ENCODE measurements at regions of chr18 and their contacts with region 1.

Region 1: GRCh38 chr18:58813561-58814225 is 51.0 kb upstream of the ZNF532 start:
- DNase-seq: no peak
- ATAC-seq: no peak
- H3K4me3 ChIP-seq: no peak overlapping the region
- H3K4me3 Mint-ChIP-seq: no peak overlapping the region
- H3K27ac ChIP-seq: no peak overlapping the region
- H3K27ac Mint-ChIP-seq: no peak overlapping the region
- H3K4me1 ChIP-seq: no peaks in the 10 kb centered on the region
- H3K4me1 Mint-ChIP-seq: no peaks in the 10 kb centered on the region
- H3K27me3 ChIP-seq: peaks cover 0 to 2% (median 0%) of the 10 kb centered on the region in 4 experiments
- H3K27me3 Mint-ChIP-seq: peaks cover under 1% of the 10 kb centered on the region
- CTCF ChIP-seq: no peak

Region 2: GRCh38 chr18:58831606-58832005 is 17.9 kb after region 1 on chr18:
- CTCF ChIA-PET with region 1: no interaction called
- POLR2A ChIA-PET with region 1: no interaction called
- intact Hi-C with region 1: no loop called
- DNase-seq: no peak
- ATAC-seq: no peak
- H3K4me3 ChIP-seq: no peak overlapping the region
- H3K4me3 Mint-ChIP-seq: no peak overlapping the region
- H3K27ac ChIP-seq: no peak overlapping the region
- H3K27ac Mint-ChIP-seq: no peak overlapping the region
- H3K4me1 ChIP-seq: no peaks in the 10 kb centered on the region
- H3K4me1 Mint-ChIP-seq: no peaks in the 10 kb centered on the region
- H3K27me3 ChIP-seq: peaks cover 0 to 4% (median 0%) of the 10 kb centered on the region in 4 experiments
- H3K27me3 Mint-ChIP-seq: no peaks in the 10 kb centered on the region
- CTCF ChIP-seq: no peak

Region 3: GRCh38 chr18:58847383-58848071 is 33.8 kb after region 1 on chr18:
- CTCF ChIA-PET with region 1: no interaction called
- POLR2A ChIA-PET with region 1: no interaction called
- intact Hi-C with region 1: loop called (anchors 5 kb)
- DNase-seq: peak; percentile 47
- ATAC-seq: peak; percentile 45
- H3K4me3 ChIP-seq: peak overlapping the region in 4 of 5 experiments; percentile 28 to 59 (median 53)
- H3K4me3 Mint-ChIP-seq: peak overlapping the region; percentile 87
- H3K27ac ChIP-seq: no peak overlapping the region
- H3K27ac Mint-ChIP-seq: peak overlapping the region; percentile 37
- H3K4me1 ChIP-seq: peaks cover 13 to 18% of the 10 kb centered on the region in 2 donors
- H3K4me1 Mint-ChIP-seq: peaks cover 21% of the 10 kb centered on the region
- H3K27me3 ChIP-seq: peaks cover 0 to 19% (median 2%) of the 10 kb centered on the region in 4 experiments
- H3K27me3 Mint-ChIP-seq: peaks cover 13% of the 10 kb centered on the region
- CTCF ChIP-seq: no peak

Measured in B cell (primary cell).